Activated CD4-positive, alpha-beta T cell treated with anti-CD3 and anti-CD28 coated beads, Interleukin-2, amount 10 ng/mL, durations not matched to agents 24 days and 14 days (primary cell): ENCODE measurements at regions of chr17 and their contacts with region 1.

Region 1: DNA sequence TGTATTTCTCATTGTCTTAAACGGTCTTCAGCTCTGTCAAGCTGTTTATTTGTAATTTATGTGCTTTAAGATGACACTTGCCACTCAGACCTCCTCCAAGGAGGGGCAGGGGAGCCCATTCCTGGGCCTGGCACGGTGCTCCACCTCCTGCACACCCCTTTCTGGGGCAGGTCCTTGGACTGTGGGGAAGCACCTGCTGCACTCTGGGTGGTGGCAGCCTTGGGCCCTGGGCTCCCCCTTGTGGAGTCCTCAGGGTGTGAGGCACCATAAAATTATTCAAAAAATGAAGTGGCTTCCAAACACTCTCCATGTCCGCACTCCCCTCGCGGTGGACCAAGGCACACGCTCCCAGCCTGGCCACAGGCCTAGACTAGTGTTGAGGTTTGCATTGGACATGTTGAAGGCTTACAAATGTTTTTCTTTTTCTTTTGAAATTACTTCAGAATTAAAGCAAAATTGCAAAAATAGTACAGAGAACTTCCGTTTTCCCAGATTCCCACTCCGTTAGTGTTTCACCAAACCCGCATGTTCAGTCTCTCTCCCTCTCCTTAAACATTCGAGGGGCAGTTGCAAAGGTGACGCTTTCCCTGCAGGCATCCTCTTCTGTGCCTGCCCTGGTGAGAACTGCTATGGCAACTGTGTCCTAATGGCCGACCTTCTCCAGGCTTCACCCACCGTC is 32.4 kb downstream of the FOXK2 start:
- DNase-seq: peak; percentile 94
- H3K4me3 Mint-ChIP-seq: no peak overlapping the region
- H3K27ac Mint-ChIP-seq: no peak overlapping the region
- H3K4me1 Mint-ChIP-seq: peaks cover 30% of the 10 kb centered on the region
- H3K27me3 Mint-ChIP-seq: no peaks in the 10 kb centered on the region

Region 2: DNA sequence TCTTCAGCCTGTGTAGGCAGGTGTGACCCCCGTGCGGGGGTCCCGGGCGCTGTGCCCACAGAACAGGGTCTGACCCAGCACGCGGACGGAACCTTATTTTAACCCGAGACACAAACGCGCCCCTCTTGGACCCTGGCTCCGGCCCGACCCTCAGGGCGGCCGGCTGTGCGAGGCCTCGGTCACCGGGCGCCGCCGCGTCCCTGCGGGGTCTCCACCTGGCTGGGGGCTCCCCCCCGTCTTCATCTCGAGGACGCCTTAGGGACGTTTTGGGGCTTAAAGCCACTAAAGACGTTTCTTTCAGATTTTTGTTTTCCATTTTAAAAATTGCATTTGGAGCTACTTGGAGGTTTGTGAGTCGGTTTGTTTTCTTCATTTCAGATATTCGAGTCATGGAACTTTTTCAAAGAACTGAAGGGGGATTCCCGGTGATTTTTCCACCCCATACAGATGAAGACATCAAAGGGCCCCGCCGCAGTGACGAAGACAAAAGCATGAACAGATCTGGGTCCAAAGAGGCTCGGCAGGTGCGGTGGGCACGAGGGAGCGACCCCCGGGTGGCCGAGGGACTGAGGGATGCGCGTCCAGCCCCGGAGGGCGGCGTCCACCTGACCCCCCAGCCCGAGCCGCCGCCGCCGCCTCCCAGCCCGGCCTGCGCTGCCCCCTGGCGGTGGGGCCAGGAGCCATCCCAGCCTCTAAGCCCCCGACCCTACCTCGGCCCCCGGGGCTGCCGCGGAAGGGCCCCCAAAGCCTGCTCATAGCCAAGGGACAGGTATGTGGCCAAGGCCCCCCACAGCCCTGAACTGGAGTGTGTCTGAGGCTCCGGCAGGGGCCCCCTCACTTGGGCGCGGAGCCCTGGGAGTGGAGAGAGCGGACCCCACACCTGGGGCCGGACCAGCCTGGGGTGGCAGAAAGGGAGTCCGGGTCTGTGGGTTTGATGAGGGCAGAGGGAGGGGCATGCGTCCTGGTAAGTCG is 230.7 kb before region 1 on chr17:
- intact Hi-C with region 1: no loop called
- DNase-seq: peak; percentile 93
- H3K4me3 Mint-ChIP-seq: peak overlapping the region; percentile 83
- H3K27ac Mint-ChIP-seq: peak overlapping the region; percentile 94
- H3K4me1 Mint-ChIP-seq: peaks cover 31% of the 10 kb centered on the region
- H3K27me3 Mint-ChIP-seq: no peaks in the 10 kb centered on the region

Region 3: GRCh38 chr17:82351716-82352488 is 200.0 kb before region 1 on chr17:
- intact Hi-C with region 1: loop called (anchors 5 kb)
- DNase-seq: peak; percentile 94
- H3K4me3 Mint-ChIP-seq: no peak overlapping the region
- H3K27ac Mint-ChIP-seq: no peak overlapping the region
- H3K4me1 Mint-ChIP-seq: peaks cover 2% of the 10 kb centered on the region
- H3K27me3 Mint-ChIP-seq: peaks cover 3% of the 10 kb centered on the region

Region 4: DNA sequence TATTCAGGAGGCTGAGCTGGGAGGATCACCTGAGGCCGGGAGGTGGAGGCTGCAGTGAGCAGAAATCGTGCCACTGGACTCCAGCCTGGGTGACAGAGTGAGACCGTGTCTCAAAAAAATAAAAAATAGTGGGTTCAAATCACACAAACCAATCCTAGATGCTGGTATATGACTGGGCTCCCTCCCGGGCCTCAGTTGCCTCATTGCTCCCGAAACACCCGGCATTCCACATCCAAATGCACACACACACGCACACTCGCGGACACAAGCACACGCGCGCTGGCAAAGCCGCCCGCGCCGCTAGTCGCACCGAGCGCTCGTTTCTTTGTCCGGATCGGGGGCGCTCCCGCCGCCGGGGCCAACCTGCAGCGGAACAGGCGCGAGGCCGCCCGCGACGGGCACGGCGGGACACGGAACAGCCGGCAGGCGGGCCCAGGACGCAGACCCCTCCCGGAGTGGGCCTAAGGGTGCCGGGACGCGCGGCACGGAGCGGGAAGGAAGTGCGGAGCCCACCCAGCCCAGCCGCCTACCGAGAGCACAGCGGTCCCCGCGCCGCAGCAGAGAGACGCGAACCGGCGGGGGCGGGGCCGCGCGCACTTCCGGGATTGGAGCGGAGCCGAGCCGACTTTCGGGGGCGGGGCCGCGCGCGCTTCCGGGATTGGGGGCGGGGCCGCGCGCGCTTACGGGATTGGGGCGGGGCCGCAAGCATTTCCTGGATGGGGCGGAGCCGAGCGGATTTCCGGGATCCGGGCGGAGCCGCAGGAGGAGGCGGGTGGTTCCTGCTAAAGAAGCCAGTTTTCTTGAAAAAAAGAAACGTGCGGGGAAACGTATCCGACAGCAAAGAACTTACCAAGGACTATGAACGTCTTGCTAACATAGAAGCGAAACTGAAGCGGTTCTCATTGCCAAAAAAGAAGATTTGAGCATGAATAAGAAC is 101.5 kb before region 1 on chr17 and contains the start of gene CYBC1:
- intact Hi-C with region 1: loop called (anchors 1 kb)
- DNase-seq: peak; percentile 98
- H3K4me3 Mint-ChIP-seq: peak within 1 kb of the TSS; percentile 89
- H3K27ac Mint-ChIP-seq: peak within 1 kb of the TSS; percentile 95
- H3K4me1 Mint-ChIP-seq: peaks cover 20% of the 10 kb centered on the region
- H3K27me3 Mint-ChIP-seq: no peaks in the 10 kb centered on the region
- total RNA-seq, gene CYBC1: 256 and 268 TPM in 2 replicates

Region 5: GRCh38 chr17:82475458-82475857 is 76.5 kb before region 1 on chr17:
- intact Hi-C with region 1: loop called (anchors 5 kb)
- DNase-seq: no peak
- H3K4me3 Mint-ChIP-seq: no peak overlapping the region
- H3K27ac Mint-ChIP-seq: no peak overlapping the region
- H3K4me1 Mint-ChIP-seq: peaks cover 13% of the 10 kb centered on the region
- H3K27me3 Mint-ChIP-seq: no peaks in the 10 kb centered on the region

Region 6: GRCh38 chr17:82494236-82495055 is 57.5 kb before region 1 on chr17:
- intact Hi-C with region 1: loop called (anchors 5 kb)
- DNase-seq: peak; percentile 96
- H3K4me3 Mint-ChIP-seq: peak overlapping the region; percentile 39
- H3K27ac Mint-ChIP-seq: peak overlapping the region; percentile 93
- H3K4me1 Mint-ChIP-seq: peaks cover 20% of the 10 kb centered on the region
- H3K27me3 Mint-ChIP-seq: no peaks in the 10 kb centered on the region

Region 7: DNA sequence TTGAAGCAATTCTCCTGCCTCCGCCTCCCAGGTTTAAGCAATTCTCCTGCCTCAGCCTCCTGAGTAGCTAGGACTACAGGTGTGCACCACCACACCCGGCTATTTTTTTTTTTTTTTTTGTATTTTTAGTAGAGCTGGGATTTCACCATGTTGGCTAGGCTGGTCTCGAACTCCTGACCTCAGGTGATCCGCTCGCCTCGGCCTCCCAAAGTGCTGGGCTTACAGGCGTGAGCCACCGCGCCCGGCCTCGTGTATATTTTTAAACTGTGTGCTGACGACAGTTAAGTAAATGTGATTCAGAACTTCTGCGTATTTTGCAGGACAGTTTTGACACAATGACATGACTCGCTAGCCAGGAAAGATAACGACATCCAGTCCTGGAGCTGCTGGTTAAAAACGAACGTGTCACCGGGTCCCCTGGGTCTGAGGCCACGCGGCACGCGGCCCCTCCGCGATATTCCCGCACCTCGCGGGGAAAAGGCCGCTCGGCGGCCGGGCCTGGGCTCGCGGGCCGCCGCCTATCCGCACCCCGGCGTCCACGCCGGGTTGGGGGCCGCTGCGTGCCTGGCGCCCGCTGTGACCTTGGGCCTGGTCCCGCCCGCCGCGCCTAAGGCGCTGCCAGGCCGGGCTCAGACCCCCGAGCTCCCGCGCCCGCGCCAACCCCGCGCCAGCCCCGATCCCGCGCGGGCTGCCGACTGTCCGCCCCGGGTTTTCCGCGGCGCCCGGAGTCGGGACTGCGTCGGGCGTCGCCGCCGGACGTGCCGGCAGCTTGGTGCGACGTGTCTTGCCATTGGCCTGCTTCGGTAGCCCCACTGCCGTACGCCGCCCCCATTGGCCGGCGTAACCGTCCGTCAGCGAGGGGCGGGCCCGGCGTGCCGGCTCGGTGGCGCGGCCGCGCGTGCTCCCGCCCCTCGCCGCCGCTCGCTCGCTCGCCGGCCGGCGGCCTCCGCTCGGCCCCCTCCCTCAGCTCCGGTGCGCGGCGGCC is 32.8 kb before region 1 on chr17 and contains the start of gene FOXK2:
- intact Hi-C with region 1: loop called (anchors 1 kb)
- DNase-seq: peak; percentile 99
- H3K4me3 Mint-ChIP-seq: peak within 1 kb of the TSS; percentile 86
- H3K27ac Mint-ChIP-seq: peak within 1 kb of the TSS; percentile 86
- H3K4me1 Mint-ChIP-seq: peaks cover 20% of the 10 kb centered on the region
- H3K27me3 Mint-ChIP-seq: no peaks in the 10 kb centered on the region
- total RNA-seq, gene FOXK2: 92.6 and 97.4 TPM in 2 replicates

Region 8: DNA sequence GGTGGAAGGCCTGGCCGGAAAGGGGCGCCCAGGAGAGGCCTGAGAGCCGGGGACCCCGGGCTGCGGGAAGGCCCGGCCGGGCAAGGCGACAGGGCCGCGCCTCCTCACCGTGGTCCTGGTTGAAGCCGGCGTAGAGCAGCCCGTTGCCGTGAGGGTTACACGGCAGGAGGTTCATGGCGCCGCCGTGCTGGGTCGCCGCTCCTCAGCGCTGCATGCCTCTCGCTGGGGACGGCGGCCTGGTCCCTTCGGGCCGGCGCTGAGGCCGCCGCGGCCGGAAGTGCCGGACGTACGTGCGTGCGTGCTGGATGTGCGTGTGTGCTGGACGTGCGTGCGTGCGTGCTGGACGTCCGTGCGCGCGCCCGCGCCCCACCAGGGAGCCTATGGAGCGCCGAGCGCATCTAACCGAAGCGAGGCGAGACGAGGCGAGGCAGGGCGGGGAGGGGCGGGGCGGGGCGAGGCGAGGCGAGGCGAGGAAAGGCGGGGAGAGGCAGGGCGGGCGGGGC is 96.3 kb after region 1 on chr17 and contains the start of gene WDR45B:
- intact Hi-C with region 1: no loop called
- DNase-seq: peak; percentile 97
- H3K4me3 Mint-ChIP-seq: peak within 1 kb of the TSS; percentile 88
- H3K27ac Mint-ChIP-seq: peak within 1 kb of the TSS; percentile 85
- H3K4me1 Mint-ChIP-seq: peaks cover 20% of the 10 kb centered on the region
- H3K27me3 Mint-ChIP-seq: no peaks in the 10 kb centered on the region
- total RNA-seq, gene WDR45B: 62.8 and 66.8 TPM in 2 replicates